GM10248 (cell line): ENCODE measurements at regions of chr20 and their contacts with region 1.

Region 1: GRCh38 chr20:18650224-18650623 is 62.4 kb downstream of the DTD1 start:
- DNase-seq: no peak
- CTCF ChIP-seq: no peak

Region 2: DNA sequence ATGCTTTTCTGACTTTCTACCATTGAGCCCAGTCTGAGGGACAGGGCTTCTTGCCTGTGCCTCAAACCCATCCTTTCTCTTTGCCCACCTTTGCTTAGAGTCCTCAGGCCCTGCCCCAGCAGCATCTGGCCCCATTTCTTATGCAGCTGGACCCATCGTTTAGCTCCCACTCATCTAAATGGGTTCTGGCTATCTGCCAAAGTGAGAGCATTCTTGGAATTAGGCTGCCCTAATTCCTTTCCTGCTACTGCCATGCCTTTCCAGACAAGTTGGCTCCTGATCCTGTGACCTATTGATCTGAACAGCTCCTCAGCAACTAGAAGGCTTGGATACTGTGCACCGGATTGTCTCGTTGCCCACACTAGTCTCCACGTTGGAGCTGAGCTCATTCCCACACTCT is 206.4 kb before region 1 on chr20:
- CTCF ChIA-PET with region 1: no interaction called
- POLR2A ChIA-PET with region 1: no interaction called
- DNase-seq: no peak
- CTCF ChIP-seq: no peak

Region 3: DNA sequence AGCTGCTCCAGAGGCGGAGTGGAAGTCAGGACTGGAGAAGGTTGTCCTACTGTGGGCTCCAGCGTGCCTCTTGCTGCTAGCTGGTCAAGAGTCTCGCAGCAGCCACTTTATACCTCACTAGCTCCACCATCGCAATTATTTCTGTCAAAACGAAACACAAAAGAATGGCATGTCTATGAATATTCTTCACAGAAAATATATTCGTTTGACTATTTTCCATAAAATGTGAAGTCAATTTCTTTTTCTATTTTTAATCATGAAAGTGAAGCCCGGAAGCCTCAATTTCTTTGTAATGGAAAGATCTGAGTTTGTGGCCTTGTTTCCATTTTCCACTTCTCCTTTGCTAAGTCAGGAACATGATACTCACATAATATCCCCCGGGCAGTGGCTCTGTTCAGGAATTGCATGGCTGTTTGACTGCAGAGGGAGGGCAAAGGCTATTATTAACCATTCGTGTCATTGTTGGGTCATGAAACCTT is 10.7 kb before region 1 on chr20:
- CTCF ChIA-PET with region 1: interaction called, 14 read pairs
- POLR2A ChIA-PET with region 1: no interaction called
- DNase-seq: no peak
- CTCF ChIP-seq: no peak

Region 4: DNA sequence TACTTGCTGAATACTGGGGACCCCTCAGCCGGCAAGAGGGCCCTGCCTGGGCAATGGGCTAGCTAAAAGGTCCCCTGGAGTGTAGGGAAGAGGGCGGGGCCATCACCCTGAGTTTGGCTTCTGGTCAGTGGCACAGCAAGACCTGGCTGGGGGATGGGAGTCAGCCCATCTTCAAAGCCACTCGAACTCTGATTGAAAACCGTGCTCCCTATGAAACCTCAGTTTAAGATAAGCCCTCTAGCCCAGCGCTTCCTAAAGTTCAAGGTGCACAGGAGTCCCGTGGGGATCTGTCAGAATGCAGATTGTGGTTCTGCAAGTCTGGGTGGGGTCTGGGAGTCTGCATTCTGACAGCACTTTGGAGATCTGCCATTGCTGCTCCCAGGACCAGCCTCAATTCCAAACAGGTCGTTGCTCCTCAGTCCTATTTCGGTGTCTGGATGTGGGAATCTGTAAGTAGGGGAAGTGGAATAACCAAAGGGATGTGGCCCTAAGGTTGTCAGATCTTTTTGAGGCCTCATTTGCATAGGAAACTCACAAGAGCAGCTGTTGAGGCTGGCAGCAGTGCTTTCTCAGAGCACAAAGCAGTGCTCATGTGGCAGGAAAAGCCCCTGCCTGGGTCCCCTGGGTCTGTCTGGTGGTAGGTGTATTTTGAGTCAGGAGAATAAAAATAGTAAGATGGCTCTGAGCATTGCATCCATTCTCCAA is 78.1 kb after region 1 on chr20:
- CTCF ChIA-PET with region 1: no interaction called
- POLR2A ChIA-PET with region 1: no interaction called
- DNase-seq: peak; percentile 41
- CTCF ChIP-seq: no peak